Mammary epithelial cell (primary cell): ENCODE measurements at regions of chr11 and their contacts with region 1.

Region 1: DNA sequence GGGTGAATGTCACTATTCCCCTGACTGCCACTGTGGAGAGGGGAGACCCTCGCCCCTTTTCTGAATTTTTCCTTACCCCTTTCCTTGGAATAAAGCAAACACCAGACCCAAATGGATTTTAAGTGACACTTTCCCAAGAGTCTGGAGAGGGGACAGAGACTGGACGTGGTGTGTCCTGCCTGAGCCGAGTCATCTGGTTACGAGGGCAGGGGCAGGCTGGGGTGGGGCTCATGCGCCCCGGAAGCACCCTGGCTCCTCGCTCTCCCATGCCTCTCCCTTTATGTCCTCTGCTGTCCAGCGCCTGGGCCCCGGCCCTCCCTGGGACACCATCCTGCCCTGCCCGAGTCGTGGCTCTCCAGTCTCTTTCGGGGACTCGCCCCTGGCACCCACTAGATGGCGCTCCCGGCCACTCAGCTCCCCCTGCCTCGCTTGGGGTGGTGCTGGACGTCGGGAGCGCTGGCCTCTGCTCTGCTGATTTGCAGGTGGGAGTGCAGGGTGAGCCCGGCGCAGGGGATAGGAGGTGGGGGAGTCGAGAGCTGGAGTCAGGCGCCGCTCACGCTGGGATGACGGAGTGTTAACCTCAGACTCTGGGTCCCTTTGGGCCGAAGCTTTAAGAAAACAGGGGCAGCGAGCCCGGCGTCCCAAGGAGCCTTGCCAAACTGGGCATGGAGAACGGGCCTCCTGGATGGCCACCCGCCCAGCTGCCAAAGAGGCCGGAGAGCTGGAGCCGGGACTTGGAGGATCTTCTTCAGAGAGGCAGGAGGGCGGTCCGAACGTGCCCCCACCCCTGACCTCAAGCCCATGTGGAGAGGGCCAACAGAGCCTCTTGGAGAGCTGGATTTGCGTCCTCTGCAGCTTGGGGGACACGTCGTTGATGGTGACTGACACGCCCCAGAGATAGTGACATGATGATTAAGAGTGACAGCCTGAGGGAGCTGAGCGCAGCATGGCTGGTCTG is 89.9 kb downstream of the RPS6KA4 start:
- DNase-seq: peak; percentile 62
- H3K4me3 ChIP-seq: peak overlapping the region in 1 of 3 experiments; percentile 36
- H3K27ac ChIP-seq: no peak overlapping the region
- H3K4me1 ChIP-seq: peaks cover 13% of the 10 kb centered on the region
- H3K27me3 ChIP-seq: no peaks in the 10 kb centered on the region
- CTCF ChIP-seq: peak; percentile 60 to 91

Region 2: GRCh38 chr11:64204464-64204989 is 244.4 kb before region 1 on chr11:
- CTCF ChIA-PET with region 1: no interaction called
- dilution Hi-C with region 1: loop called (anchors 10 kb)
- in situ Hi-C with region 1: no loop called
- intact Hi-C with region 1: no loop called
- DNase-seq: peak; percentile 81
- H3K4me3 ChIP-seq: no peak overlapping the region
- H3K27ac ChIP-seq: no peak overlapping the region
- H3K4me1 ChIP-seq: peaks cover 5% of the 10 kb centered on the region
- H3K27me3 ChIP-seq: no peaks in the 10 kb centered on the region
- CTCF ChIP-seq: peak; percentile 80 to 91

Region 3: DNA sequence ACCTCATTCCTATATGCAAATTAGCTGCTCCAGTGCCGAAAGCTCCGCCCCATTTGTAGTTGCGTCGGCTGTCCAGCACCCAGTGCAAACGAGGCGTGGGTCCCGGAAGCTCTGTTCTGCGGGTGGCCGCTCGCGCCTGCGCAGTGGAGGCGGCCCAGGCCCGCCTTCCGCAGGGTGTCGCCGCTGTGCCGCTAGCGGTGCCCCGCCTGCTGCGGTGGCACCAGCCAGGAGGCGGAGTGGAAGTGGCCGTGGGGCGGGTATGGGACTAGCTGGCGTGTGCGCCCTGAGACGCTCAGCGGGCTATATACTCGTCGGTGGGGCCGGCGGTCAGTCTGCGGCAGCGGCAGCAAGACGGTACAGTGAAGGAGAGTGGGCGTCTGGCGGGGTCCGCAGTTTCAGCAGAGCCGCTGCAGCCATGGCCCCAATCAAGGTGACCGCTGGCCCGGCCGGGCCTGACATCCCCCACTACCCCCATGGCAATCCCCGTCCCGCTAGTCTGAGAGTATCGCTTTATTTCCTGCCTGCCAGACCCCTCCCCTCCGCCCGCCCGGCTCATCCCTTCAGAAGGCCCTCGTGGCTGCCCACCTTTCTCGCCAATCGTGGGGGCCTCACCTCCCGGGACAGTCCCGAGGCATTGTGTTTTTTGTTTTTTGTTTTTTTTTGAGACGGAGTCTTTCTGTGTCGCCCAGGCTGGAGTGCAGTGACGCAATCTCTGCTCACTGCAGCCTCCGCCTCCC is 130.8 kb before region 1 on chr11 and contains the start of gene PRDX5:
- CTCF ChIA-PET with region 1: no interaction called
- dilution Hi-C with region 1: no loop called
- in situ Hi-C with region 1: no loop called
- intact Hi-C with region 1: loop called (anchors 2 kb)
- DNase-seq: peak; percentile 95
- H3K4me3 ChIP-seq: peak within 1 kb of the TSS; percentile 77 to 91 (median 79)
- H3K27ac ChIP-seq: peak within 1 kb of the TSS; percentile 95
- H3K4me1 ChIP-seq: peaks cover 41% of the 10 kb centered on the region
- H3K27me3 ChIP-seq: no peaks in the 10 kb centered on the region
- CTCF ChIP-seq: peak; percentile 5 to 62
- total RNA-seq, gene PRDX5: 333 to 449 TPM

Region 4: GRCh38 chr11:64489831-64490441 is 41.1 kb after region 1 on chr11:
- CTCF ChIA-PET with region 1: interaction called, 4 read pairs
- dilution Hi-C with region 1: no loop called
- in situ Hi-C with region 1: no loop called
- intact Hi-C with region 1: loop called (anchors 2 kb)
- DNase-seq: peak; percentile 27
- H3K4me3 ChIP-seq: no peak overlapping the region
- H3K27ac ChIP-seq: no peak overlapping the region
- H3K4me1 ChIP-seq: no peaks in the 10 kb centered on the region
- H3K27me3 ChIP-seq: peaks cover 2% of the 10 kb centered on the region
- CTCF ChIP-seq: peak; percentile 69 to 95

Region 5: DNA sequence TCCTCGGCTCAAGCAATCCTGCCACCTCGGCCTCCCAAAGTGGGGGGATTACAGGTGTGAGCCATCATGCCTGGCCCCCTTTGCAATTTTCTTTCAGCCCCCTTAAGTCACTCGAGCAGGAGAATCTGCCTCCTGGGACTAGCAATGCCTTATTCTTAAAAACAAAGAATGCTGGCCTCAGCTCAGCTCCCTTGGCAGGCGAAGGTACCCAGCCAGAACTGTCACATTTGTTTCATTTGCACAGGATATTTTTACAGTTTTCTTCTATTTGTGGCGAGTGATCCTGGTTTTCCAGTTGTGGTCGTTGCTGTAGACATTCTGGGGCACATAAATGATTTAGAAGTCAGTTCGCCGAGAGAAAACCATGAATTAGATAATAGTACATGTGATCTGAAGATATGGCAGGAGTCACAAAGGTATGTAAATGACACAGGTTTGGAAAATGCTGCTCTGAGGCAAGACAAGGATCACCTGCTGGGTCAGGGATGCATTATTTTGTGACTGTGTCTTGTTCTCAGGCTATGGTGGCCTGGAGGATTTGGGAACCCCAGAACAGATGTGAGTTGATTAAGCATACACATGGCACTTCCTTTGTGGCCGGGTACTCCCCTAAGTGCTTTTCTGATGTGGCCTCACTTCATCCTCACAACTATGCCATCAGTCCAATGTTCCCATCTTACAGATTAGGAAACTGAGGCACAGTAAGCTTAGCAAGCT is 91.0 kb after region 1 on chr11:
- CTCF ChIA-PET with region 1: no interaction called
- dilution Hi-C with region 1: loop called (anchors 5 kb)
- in situ Hi-C with region 1: no loop called
- intact Hi-C with region 1: no loop called
- DNase-seq: no peak
- H3K4me3 ChIP-seq: no peak overlapping the region
- H3K27ac ChIP-seq: no peak overlapping the region
- H3K4me1 ChIP-seq: peaks cover 33% of the 10 kb centered on the region
- H3K27me3 ChIP-seq: no peaks in the 10 kb centered on the region
- CTCF ChIP-seq: no peak

Region 6: DNA sequence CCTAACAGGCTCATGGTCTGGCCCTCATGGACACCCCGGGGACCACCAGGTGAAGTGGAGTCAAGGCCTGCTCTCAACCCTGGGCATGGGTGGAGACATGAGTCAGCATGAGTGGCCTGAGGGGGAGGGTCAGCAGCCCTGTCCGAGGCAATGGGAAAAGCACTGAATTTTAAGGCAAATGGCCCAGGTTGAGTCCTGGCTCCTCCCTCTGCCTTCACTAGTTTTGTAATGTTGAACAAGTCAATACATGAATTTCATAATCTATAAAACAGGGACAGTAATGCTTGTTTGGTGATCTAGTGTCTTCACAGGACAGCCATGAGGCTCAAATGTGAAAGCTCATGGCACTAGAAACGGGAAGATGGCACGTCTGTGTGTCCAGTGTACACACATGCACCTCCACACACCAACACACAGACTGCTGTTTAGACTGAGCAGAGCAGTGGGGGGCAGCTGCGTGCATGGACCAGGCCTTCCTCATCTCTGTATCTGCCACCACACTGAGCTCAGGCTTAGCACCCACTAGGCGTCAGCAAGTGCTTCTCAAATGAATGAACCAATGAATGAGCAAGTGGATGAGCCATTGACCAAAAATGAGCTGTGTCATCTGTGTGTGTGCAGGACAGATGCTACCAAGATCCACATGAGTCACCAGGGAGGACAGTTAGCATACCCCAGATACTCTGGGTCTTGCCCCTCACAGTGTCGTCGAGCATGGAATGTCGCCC is 210.7 kb after region 1 on chr11:
- CTCF ChIA-PET with region 1: interaction called, 10 read pairs
- dilution Hi-C with region 1: no loop called
- in situ Hi-C with region 1: no loop called
- intact Hi-C with region 1: no loop called
- DNase-seq: peak; percentile 88
- H3K4me3 ChIP-seq: no peak overlapping the region
- H3K27ac ChIP-seq: peak overlapping the region; percentile 57
- H3K4me1 ChIP-seq: peaks cover 26% of the 10 kb centered on the region
- H3K27me3 ChIP-seq: no peaks in the 10 kb centered on the region
- CTCF ChIP-seq: peak in 1 of 2 donors; percentile 50

Region 7: GRCh38 chr11:64688534-64688982 is 239.7 kb after region 1 on chr11:
- CTCF ChIA-PET with region 1: interaction called, 3 read pairs
- dilution Hi-C with region 1: no loop called
- in situ Hi-C with region 1: no loop called
- intact Hi-C with region 1: loop called (anchors 1 kb)
- DNase-seq: peak; percentile 61
- H3K4me3 ChIP-seq: peak overlapping the region in 2 of 3 experiments; percentile 21 to 27
- H3K27ac ChIP-seq: no peak overlapping the region
- H3K4me1 ChIP-seq: peaks cover 19% of the 10 kb centered on the region
- H3K27me3 ChIP-seq: no peaks in the 10 kb centered on the region
- CTCF ChIP-seq: peak; percentile 72 to 82